ENCODE measurements at regions of chr19 and their contacts with region 1.

Region 1: GRCh38 chr19:6297202-6297601 is 17.4 kb upstream of the MLLT1 start:
- DNase-seq: no peak
- H3K4me3 Mint-ChIP-seq: no peak overlapping the region
- H3K27ac Mint-ChIP-seq: no peak overlapping the region
- H3K4me1 Mint-ChIP-seq: no peaks in the 10 kb centered on the region
- H3K27me3 Mint-ChIP-seq: no peaks in the 10 kb centered on the region
- CTCF ChIP-seq: no peak

Region 2: DNA sequence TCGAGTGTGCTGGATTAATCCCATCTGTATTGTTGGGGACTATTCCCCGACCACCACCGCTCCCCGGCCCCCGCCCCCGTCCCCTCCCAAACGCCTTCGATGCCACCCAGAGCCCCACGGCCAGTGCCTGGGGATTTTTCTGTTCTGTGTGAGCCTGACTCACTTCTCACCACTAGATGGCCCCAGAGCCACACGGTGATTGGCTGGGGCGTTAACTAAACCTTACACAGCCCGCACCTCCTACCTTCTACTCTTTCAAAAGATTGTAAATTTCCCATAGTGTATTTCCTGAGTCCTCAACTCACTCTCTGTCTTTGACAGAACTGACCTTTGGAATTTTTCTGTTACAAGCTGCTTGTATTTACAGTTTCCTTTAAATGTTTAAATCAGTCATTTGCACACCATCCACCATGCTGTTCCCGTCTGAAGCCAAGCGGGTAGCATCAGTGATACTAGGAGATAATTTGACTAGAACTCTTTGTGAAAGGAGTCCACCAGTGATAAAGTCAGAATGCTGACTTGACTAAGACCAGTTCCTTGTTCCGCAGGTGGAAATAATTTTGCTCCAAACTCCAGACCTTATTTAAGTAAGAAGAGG is 248.3 kb before region 1 on chr19:
- CTCF ChIA-PET with region 1: no interaction called
- intact Hi-C with region 1: loop called (anchors 5 kb)
- DNase-seq: peak; percentile 72
- H3K4me3 Mint-ChIP-seq: no peak overlapping the region
- H3K27ac Mint-ChIP-seq: no peak overlapping the region
- H3K4me1 Mint-ChIP-seq: no peaks in the 10 kb centered on the region
- H3K27me3 Mint-ChIP-seq: no peaks in the 10 kb centered on the region
- CTCF ChIP-seq: peak; percentile 42

Region 3: DNA sequence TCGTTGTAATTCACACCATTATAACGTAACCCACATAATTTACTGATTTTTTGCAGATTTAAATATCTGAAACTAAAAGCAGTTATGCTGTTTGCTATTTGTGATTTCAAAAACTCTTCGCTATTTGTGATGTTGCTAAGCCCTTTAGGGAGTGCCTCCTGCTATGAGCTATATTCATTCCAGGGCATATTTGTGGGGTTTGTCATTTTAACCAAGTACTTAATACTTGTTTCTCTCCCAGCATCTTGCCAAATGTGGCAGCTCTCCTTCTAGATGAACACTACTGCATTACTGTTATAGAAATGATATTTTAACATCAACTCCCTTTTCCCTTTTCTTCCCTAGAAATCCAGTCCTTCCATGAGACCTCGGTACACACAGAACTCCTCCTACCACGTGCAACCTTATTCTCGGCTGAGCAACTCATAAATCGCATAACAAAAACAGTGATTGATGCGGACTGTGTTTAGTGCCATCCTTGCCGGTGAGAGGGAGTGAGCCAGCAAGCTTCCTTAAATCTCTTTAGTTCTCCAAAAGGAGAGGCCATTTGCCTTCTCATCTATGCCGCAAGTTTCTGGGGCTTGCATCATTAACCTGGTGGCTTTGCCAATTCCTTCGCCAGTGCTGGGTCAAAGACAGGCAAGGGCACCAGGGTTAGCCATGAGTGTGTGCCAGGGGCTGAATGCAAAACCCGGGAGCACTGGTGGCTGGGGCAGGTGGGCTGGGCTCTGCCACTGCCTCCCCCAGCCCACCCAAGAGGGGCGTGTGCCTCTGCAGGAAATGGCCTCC is 220.3 kb before region 1 on chr19:
- CTCF ChIA-PET with region 1: no interaction called
- intact Hi-C with region 1: no loop called
- DNase-seq: no peak
- H3K4me3 Mint-ChIP-seq: no peak overlapping the region
- H3K27ac Mint-ChIP-seq: no peak overlapping the region
- H3K4me1 Mint-ChIP-seq: peaks cover 15% of the 10 kb centered on the region
- H3K27me3 Mint-ChIP-seq: no peaks in the 10 kb centered on the region
- CTCF ChIP-seq: no peak

Region 4: DNA sequence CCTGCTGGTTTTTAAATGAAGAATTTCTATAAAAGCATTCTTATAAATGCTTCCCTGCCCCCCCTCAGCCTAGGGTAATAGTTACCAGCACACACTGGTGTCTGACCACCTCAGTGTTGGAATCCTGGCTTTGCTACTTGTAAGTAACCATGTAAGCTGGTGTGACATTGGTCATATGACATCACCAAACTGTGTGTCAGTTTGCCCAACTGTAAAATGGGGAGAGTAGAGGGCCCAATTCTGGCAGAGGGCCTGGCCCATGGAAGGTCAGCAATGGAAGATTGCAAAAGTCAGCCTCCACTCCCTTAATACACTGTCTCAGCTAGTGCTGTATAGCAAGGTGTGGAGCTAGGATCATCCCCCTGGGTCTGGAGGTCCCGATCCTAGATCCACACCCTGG is 130.1 kb before region 1 on chr19:
- CTCF ChIA-PET with region 1: interaction called, 4 read pairs
- intact Hi-C with region 1: loop called (anchors 2 kb)
- DNase-seq: no peak
- H3K4me3 Mint-ChIP-seq: no peak overlapping the region
- H3K27ac Mint-ChIP-seq: no peak overlapping the region
- H3K4me1 Mint-ChIP-seq: no peaks in the 10 kb centered on the region
- H3K27me3 Mint-ChIP-seq: peaks cover 13% of the 10 kb centered on the region
- CTCF ChIP-seq: no peak

Region 5: GRCh38 chr19:6225232-6225865 is 71.9 kb before region 1 on chr19:
- CTCF ChIA-PET with region 1: no interaction called
- intact Hi-C with region 1: no loop called
- DNase-seq: no peak
- H3K4me3 Mint-ChIP-seq: no peak overlapping the region
- H3K27ac Mint-ChIP-seq: no peak overlapping the region
- H3K4me1 Mint-ChIP-seq: no peaks in the 10 kb centered on the region
- H3K27me3 Mint-ChIP-seq: no peaks in the 10 kb centered on the region
- CTCF ChIP-seq: no peak

Region 6: GRCh38 chr19:6318772-6319171 is 21.6 kb after region 1 on chr19:
- CTCF ChIA-PET with region 1: no interaction called
- intact Hi-C with region 1: no loop called
- DNase-seq: no peak
- H3K4me3 Mint-ChIP-seq: no peak overlapping the region
- H3K27ac Mint-ChIP-seq: no peak overlapping the region
- H3K4me1 Mint-ChIP-seq: no peaks in the 10 kb centered on the region
- H3K27me3 Mint-ChIP-seq: peaks cover 21% of the 10 kb centered on the region
- CTCF ChIP-seq: no peak